ENCODE measurements at regions of chrX and their contacts with region 1.

Region 1: DNA sequence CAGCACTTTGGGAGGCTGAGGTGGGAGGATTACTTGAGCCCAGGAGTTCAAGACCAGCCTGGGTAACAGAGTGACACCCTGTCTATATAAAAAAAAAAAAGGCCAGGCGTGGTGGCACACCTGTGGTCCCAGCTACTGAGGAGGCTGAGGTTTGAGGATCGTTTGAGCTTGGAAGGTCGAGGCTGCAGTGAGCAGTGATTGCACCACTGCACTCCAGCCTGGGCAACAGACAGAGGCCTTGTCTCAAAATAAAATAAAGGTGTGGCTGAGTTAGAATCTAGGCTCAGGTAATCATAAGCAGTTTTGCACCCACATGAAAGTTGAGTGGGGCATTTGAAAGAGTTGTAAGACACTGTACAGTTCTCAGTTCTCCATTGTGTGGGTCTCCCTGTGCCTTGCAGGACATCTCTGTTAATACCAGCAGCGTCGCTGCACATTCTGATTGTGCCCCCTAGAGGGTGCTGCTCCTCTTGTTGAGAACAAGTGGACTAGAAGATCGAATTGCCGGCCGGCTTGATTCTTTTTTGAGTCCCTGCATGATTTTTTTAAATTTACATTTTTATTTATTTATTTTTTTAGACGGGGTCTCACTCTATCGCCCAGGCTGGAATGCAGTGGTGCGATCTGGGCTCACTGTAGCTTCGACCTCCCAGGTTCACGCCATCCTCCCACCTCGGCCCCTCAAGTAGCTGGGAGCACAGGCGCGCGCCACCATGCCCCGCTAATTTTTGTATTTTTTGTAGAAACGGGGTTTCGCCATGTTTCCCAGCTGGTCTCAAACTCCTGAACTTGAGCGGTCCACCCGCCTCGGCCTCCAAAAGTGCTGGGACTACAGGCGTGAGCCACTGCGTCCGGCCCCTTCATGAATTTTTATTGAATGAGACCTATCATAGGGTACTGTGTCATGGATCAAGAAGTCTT is 73.6 kb upstream of the RBMX start:
- DNase-seq: peak; percentile 20 to 54 (median 41)
- ATAC-seq: peak in 1 of 4 donors; percentile 62
- H3K4me3 ChIP-seq: no peak overlapping the region
- H3K27ac ChIP-seq: no peak overlapping the region
- H3K4me1 ChIP-seq: no peaks in the 10 kb centered on the region
- H3K27me3 ChIP-seq: peaks cover 0 to 5% (median 0%) of the 10 kb centered on the region in 9 donors
- CTCF ChIP-seq: peak; percentile 27 to 61 (median 50)
- POLR2A ChIP-seq: no peak

Region 2: GRCh38 chrX:136856551-136856950 is 97.6 kb before region 1 on chrX:
- intact Hi-C with region 1: no loop called
- DNase-seq: no peak
- ATAC-seq: peak in 2 of 4 donors; percentile 38 to 40
- H3K4me3 ChIP-seq: no peak overlapping the region
- H3K27ac ChIP-seq: peak overlapping the region in 1 of 12 donors; percentile 69
- H3K4me1 ChIP-seq: peaks cover 0 to 12% (median 0%) of the 10 kb centered on the region in 12 donors
- H3K27me3 ChIP-seq: no peaks in the 10 kb centered on the region
- CTCF ChIP-seq: no peak
- POLR2A ChIP-seq: no peak

Region 3: DNA sequence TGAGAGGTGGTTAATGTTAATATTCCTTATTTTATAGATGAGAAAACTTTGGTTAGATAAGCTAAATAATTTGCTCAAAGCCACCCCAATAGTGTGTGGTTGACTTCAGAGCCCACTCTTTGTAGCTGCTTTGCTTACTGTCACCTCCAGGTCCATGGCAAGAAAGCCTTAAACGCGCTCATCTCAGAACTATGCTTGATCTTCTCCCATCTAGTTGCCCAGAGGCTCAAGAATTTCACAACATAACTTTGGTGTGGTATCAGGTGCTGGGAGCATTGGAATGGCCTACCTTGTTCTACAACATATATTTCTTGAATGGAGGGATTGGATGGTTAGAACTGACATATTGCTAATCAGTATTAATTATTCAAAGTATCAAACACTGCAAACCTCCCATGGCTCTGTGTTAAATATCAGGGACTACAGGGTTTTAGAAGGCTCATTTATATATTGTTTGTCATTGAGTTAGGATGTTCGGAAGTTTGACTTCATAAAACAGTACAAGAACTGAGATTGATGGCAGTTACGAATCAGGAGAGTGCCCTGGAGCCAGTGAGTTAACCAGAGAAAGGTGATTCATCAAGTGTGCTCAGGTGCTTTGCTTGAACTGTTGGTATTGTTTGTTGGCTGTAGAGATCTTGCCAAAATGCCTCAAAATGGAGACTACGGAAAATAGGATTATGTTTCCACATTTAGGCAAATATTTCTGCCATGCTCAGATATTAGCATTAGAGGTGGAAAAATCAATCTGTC is 87.0 kb after region 1 on chrX:
- intact Hi-C with region 1: loop called in 1 of 10 experiments (anchors 10 kb)
- DNase-seq: no peak
- ATAC-seq: no peak
- H3K4me3 ChIP-seq: no peak overlapping the region
- H3K27ac ChIP-seq: no peak overlapping the region
- H3K4me1 ChIP-seq: no peaks in the 10 kb centered on the region
- H3K27me3 ChIP-seq: peaks cover 0 to 31% (median 0%) of the 10 kb centered on the region in 9 donors
- CTCF ChIP-seq: no peak
- POLR2A ChIP-seq: no peak

Region 4: DNA sequence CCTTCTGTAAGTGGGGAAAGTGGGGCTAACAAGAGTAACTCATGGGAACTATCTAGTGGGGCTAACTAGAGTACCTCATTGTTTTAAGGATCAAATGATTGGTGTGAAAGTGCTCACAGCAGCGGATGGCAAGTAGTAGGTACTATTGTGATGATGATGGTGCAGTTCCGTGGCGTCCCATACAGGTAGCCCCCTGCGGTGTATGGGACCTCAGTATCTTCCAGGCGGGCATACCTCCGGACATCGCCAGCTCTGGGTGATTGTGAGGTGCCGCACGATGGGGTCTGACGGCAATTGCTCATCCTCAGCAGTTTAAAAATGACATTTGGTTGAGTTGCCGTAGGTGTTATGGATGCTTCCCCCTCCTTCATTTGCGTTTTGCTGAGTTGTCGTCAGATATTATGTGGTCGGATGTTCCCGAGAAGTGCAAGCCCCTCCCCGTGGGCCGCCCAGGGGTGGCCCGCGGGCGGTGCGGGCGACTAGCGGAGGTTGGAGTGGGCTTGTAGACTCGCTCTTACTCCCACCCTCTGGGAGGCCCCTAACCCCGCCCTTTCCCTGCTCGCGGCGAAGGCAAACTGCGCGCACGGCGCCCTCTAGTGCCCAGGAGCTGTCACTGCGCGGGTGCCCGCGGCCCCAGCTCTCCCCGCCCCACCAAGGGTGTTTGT is 98.0 kb after region 1 on chrX:
- intact Hi-C with region 1: loop called in 9 of 10 experiments (anchors 2 to 10 kb)
- DNase-seq: peak; percentile 39 to 78 (median 52)
- ATAC-seq: peak in 3 of 4 donors; percentile 78 to 83 (median 80)
- H3K4me3 ChIP-seq: peak overlapping the region; percentile 14 to 52 (median 44)
- H3K27ac ChIP-seq: no peak overlapping the region
- H3K4me1 ChIP-seq: peaks cover 0 to 18% (median 2%) of the 10 kb centered on the region in 12 donors
- H3K27me3 ChIP-seq: peaks cover 0 to 45% (median 0%) of the 10 kb centered on the region in 9 donors
- CTCF ChIP-seq: peak; percentile 65 to 84 (median 74)
- POLR2A ChIP-seq: no peak

Region 5: DNA sequence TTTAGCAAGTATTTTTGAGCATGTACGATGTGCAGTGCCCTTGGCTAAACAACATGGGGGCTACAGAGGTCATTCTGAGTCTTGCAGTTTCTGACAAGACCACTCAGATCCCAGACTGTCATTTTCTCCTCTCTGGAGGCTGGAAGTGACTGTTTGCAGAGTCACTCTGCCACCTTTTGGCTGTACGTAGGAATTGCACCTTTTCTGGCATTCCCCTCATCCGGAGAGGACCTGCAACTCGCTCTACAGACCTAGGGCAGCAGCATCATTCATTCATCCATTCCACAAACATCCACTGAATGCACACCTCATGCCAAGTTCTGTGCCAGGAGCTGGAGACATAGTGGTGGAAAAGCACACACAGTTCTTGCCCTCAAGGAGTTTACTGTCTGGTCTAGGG is 240.0 kb after region 1 on chrX:
- intact Hi-C with region 1: loop called in 4 of 10 experiments (anchors 10 kb)
- DNase-seq: no peak
- ATAC-seq: no peak
- H3K4me3 ChIP-seq: no peak overlapping the region
- H3K27ac ChIP-seq: no peak overlapping the region
- H3K4me1 ChIP-seq: no peaks in the 10 kb centered on the region
- H3K27me3 ChIP-seq: peaks cover 0 to 23% (median 0%) of the 10 kb centered on the region in 9 donors
- CTCF ChIP-seq: peak in 9 of 12 donors; percentile 15 to 42 (median 26)
- POLR2A ChIP-seq: no peak

Measured in heart left ventricle (tissue), 16 donors.